MCF 10A (cell line): ENCODE measurements at regions of chr1 and their contacts with region 1.

Region 1: GRCh38 chr1:69700770-69701169 is 133.0 kb downstream of the LRRC7 start:
- DNase-seq: peak; percentile 55
- H3K4me3 Mint-ChIP-seq: no peak overlapping the region
- H3K27ac Mint-ChIP-seq: no peak overlapping the region
- H3K4me1 Mint-ChIP-seq: no peaks in the 10 kb centered on the region
- H3K27me3 Mint-ChIP-seq: peaks cover 9% of the 10 kb centered on the region
- CTCF ChIP-seq: peak; percentile 33

Region 2: DNA sequence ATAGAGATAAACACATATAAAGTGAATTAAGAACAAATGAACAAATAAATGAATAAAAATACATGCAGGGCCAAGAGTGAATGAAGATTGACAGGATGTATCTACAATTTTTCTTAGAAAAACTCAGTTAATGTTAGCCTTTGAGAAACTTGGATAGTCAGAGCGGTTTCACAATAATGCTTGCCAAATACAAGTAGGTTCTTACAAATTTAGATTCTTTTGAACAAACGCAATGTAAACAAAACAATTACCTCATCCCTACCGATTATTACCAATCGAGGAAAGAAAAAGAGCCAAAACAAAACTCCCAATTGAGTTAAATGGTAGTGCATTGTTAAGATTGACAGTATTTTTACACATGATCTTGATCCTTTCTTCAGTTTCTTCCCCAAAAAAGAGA is 1027.0 kb before region 1 on chr1:
- CTCF ChIA-PET with region 1: no interaction called
- POLR2A ChIA-PET with region 1: no interaction called
- intact Hi-C with region 1: loop called (anchors 5 kb)
- DNase-seq: peak; percentile 68
- H3K4me3 Mint-ChIP-seq: no peak overlapping the region
- H3K27ac Mint-ChIP-seq: no peak overlapping the region
- H3K4me1 Mint-ChIP-seq: peaks cover 6% of the 10 kb centered on the region
- H3K27me3 Mint-ChIP-seq: peaks cover 25% of the 10 kb centered on the region
- CTCF ChIP-seq: no peak